Heart left ventricle (tissue), 16 donors: ENCODE measurements at regions of chr15 and their contacts with region 1.

Region 1: DNA sequence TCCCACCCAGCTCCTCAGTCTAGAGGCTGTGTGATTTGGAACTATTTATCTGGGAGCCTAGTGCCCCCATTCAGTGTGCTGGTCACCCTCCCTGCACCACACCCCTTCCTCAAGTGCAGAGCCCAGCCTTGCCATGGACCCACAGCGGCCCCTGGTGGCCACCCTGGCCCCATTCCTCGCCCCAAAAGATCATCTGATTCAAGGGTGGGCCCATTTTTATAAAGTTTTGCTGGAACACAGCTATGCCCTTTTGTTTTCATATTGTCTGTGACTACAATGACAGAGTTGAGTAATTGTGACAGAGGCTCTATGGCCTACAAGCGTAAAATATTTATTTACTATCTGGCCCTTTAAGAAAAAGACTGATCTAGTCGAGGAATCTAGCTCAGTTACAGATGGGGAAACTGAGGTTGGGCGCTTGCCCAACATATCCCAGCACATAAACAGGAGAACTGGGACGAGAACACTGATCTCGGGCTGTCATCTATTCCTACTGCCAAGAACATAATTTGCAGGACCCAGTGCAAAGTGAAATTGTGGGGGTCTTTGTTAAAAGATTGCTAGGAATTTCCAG is 1.8 kb downstream of the FES start:
- DNase-seq: peak; percentile 79 to 91 (median 84)
- ATAC-seq: peak; percentile 54 to 79 (median 63)
- H3K4me3 ChIP-seq: peak overlapping the region in 11 of 12 donors; percentile 43 to 86 (median 72)
- H3K27ac ChIP-seq: peak overlapping the region; percentile 88 to 99 (median 96)
- H3K4me1 ChIP-seq: peaks cover 0 to 59% (median 37%) of the 10 kb centered on the region in 12 donors
- H3K27me3 ChIP-seq: no peaks in the 10 kb centered on the region
- CTCF ChIP-seq: peak; percentile 95 to 100 (median 98)
- POLR2A ChIP-seq: no peak

Region 2: DNA sequence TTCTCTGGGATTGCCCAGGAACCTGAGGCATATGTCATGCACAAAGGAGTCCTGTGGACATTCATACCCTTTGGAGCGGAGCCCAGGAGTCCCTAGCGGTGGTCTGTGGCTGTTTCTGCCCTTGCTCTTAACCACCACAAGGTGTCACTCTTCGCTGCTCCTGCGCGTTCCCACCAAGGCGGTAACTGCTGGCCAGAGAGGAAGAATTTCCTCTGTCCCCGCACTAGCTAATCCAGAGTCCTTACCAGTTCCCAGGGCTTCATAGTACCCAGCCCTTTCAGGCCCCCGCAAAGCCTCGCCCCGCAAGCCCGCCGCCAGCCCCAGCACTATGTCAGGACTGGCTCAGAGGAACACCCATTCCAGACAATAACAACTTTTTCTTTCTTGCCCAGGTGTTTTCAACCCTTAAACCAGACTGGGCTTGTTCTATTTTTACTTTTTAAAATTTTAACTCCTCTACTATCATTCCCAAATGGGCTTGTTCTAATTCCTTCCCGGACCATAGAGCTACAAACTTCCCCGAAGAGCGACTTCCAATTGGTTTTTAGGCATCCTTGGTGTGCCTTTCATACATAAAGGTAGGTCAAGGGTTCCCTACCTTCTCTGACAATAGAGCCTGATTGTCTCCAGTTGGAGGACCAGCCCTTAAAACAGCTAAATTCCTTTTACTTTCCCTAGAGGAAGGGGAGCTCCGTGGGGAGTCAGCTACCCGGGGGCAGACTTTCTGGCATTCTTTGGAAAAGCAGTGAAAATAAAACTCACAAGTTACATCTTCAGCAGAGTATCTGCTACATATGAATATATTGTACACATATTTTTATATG is 565.9 kb before region 1 on chr15:
- intact Hi-C with region 1: loop called in 1 of 10 experiments (anchors 10 kb)
- DNase-seq: peak; percentile 77 to 86 (median 85)
- ATAC-seq: peak; percentile 87 to 95 (median 91)
- H3K4me3 ChIP-seq: peak overlapping the region in 6 of 12 donors; percentile 16 to 29 (median 24)
- H3K27ac ChIP-seq: peak overlapping the region in 6 of 12 donors; percentile 24 to 50 (median 39)
- H3K4me1 ChIP-seq: peaks cover 0 to 27% (median 15%) of the 10 kb centered on the region in 12 donors
- H3K27me3 ChIP-seq: no peaks in the 10 kb centered on the region
- CTCF ChIP-seq: peak; percentile 95 to 99 (median 99)
- POLR2A ChIP-seq: no peak

Region 3: DNA sequence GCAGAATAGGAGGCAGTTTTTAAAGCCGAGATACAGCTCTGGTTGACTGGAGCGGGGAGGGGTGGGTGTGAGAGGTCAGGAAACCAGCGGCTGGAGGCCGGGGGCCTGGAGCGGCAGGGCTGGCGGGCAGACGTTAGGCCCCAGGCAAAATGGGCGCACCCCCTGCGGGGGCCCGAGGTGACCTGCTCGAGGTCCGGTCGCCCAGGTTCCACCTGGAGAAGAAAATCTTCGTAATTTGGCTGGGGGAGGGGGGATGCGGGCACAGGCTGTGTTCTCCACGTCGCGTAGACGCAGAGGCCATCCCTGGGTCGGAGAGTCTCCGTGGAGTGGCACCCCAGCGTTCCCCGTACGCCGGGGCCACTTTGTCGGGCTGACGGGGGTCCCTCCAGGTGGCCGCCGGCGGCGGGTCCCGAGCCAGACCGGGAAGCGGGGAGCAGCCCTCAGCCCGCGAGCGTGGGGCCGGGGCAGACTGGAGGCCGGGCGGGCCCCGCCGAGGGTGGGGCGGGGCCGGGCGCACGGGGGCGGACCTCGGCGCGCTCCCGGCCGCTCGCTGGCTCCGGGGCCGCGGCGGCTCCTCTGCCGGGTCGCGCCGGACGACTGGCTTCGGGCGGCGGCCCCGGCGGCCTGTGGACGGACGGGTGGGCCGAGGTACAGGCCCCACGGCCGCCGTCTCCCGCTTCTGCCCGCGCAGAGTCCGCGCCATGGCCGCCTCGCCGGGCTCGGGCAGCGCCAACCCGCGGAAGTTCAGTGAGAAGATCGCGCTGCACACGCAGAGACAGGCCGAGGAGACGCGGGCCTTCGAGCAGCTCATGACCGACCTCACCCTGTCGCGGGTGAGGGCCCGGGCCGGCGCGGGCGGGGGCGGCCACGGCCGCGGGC is 356.5 kb before region 1 on chr15 and contains the start of gene CRTC3:
- intact Hi-C with region 1: loop called in 1 of 10 experiments (anchors 10 kb)
- DNase-seq: peak; percentile 59 to 78 (median 69)
- ATAC-seq: peak; percentile 77 to 94 (median 86)
- H3K4me3 ChIP-seq: peak within 1 kb of the TSS; percentile 65 to 95 (median 85)
- H3K27ac ChIP-seq: peak within 1 kb of the TSS; percentile 86 to 98 (median 95)
- H3K4me1 ChIP-seq: peaks cover 0 to 42% (median 24%) of the 10 kb centered on the region in 12 donors
- H3K27me3 ChIP-seq: no peaks in the 10 kb centered on the region
- CTCF ChIP-seq: no peak
- POLR2A ChIP-seq: peak in 1 of 2 donors; percentile 64
- total RNA-seq, gene CRTC3: 21.5 to 42.2 (median 26.8) TPM

Region 4: DNA sequence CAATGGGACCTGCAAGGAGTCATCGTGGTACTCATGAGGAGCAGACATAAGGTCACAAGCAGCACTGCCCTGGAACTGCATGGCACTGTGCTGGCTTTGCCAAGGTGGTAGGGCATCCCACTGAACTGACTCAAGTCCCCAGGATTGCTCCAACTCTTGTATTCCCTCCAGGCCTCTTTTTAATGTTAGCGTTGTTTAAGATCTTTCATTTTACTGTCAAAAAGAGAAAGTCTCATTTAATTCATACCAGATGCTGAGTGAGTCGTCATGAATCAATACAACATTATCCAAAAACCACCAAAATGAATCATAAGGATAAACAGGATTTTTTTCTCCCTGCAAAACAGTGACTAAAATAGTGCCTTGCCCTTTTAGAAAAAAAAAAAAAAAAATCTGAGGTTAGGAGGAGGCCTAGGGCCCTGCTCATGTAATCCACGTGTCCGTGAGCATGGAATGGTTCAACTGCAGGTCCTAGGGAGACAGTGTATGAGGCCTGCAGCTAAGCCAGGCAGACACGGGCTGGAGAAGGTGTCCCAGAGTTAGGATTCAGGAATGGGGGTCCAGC is 205.7 kb before region 1 on chr15:
- intact Hi-C with region 1: no loop called
- DNase-seq: no peak
- ATAC-seq: peak in 3 of 4 donors; percentile 62 to 91 (median 82)
- H3K4me3 ChIP-seq: no peak overlapping the region
- H3K27ac ChIP-seq: peak overlapping the region in 7 of 12 donors; percentile 5 to 76 (median 46)
- H3K4me1 ChIP-seq: peaks cover 0 to 19% (median 0%) of the 10 kb centered on the region in 12 donors
- H3K27me3 ChIP-seq: no peaks in the 10 kb centered on the region
- CTCF ChIP-seq: no peak
- POLR2A ChIP-seq: no peak

Region 5: GRCh38 chr15:90691982-90692773 is 193.9 kb before region 1 on chr15:
- intact Hi-C with region 1: loop called in 2 of 10 experiments (anchors 5 kb)
- DNase-seq: no peak
- ATAC-seq: no peak
- H3K4me3 ChIP-seq: no peak overlapping the region
- H3K27ac ChIP-seq: no peak overlapping the region
- H3K4me1 ChIP-seq: peaks cover 0 to 6% (median 0%) of the 10 kb centered on the region in 12 donors
- H3K27me3 ChIP-seq: no peaks in the 10 kb centered on the region
- CTCF ChIP-seq: no peak
- POLR2A ChIP-seq: no peak

Region 6: GRCh38 chr15:90780916-90781315 is 105.2 kb before region 1 on chr15:
- intact Hi-C with region 1: no loop called
- DNase-seq: no peak
- ATAC-seq: peak in 1 of 4 donors; percentile 51
- H3K4me3 ChIP-seq: no peak overlapping the region
- H3K27ac ChIP-seq: peak overlapping the region in 1 of 12 donors; percentile 51
- H3K4me1 ChIP-seq: peaks cover 0 to 20% (median 0%) of the 10 kb centered on the region in 12 donors
- H3K27me3 ChIP-seq: no peaks in the 10 kb centered on the region
- CTCF ChIP-seq: no peak
- POLR2A ChIP-seq: no peak

Region 7: GRCh38 chr15:90869601-90870353 is 16.4 kb before region 1 on chr15:
- intact Hi-C with region 1: loop called in 2 of 10 experiments (anchors 2 kb)
- DNase-seq: peak; percentile 83 to 92 (median 87)
- ATAC-seq: peak; percentile 80 to 93 (median 86)
- H3K4me3 ChIP-seq: peak overlapping the region in 10 of 12 donors; percentile 80 to 96 (median 89)
- H3K27ac ChIP-seq: peak overlapping the region; percentile 91 to 100 (median 98)
- H3K4me1 ChIP-seq: peaks cover 16 to 62% (median 46%) of the 10 kb centered on the region in 12 donors
- H3K27me3 ChIP-seq: no peaks in the 10 kb centered on the region
- CTCF ChIP-seq: no peak
- POLR2A ChIP-seq: no peak

Region 8: GRCh38 chr15:90924375-90924774 is 38.2 kb after region 1 on chr15:
- intact Hi-C with region 1: no loop called
- DNase-seq: no peak
- ATAC-seq: no peak
- H3K4me3 ChIP-seq: no peak overlapping the region
- H3K27ac ChIP-seq: no peak overlapping the region
- H3K4me1 ChIP-seq: peaks cover 0 to 15% (median 4%) of the 10 kb centered on the region in 12 donors
- H3K27me3 ChIP-seq: no peaks in the 10 kb centered on the region
- CTCF ChIP-seq: no peak
- POLR2A ChIP-seq: no peak

Region 9: GRCh38 chr15:91116113-91117067 is 230.3 kb after region 1 on chr15:
- intact Hi-C with region 1: no loop called
- DNase-seq: peak in 1 of 5 donors; percentile 31
- ATAC-seq: peak; percentile 54 to 91 (median 74)
- H3K4me3 ChIP-seq: no peak overlapping the region
- H3K27ac ChIP-seq: peak overlapping the region in 2 of 12 donors; percentile 41 to 57
- H3K4me1 ChIP-seq: peaks cover 0 to 38% (median 15%) of the 10 kb centered on the region in 12 donors
- H3K27me3 ChIP-seq: peaks cover 0 to 13% (median 0%) of the 10 kb centered on the region in 9 donors
- CTCF ChIP-seq: no peak
- POLR2A ChIP-seq: no peak